Ovary (tissue), 10 donors: ENCODE measurements at regions of chr10 and their contacts with region 1.

Region 1: GRCh38 chr10:4267086-4267773 is 482.2 kb upstream of the KLF6 start:
- DNase-seq: no peak
- H3K4me3 ChIP-seq: no peak overlapping the region
- H3K27ac ChIP-seq: no peak overlapping the region
- H3K4me1 ChIP-seq: peaks cover 12% of the 10 kb centered on the region
- H3K27me3 ChIP-seq: no peaks in the 10 kb centered on the region
- CTCF ChIP-seq: no peak
- EP300 ChIP-seq: no peak
- POLR2A ChIP-seq: no peak

Region 2: GRCh38 chr10:3472287-3473051 is 794.8 kb before region 1 on chr10:
- intact Hi-C with region 1: loop called in 1 of 4 experiments (anchors 10 kb)
- DNase-seq: no peak
- H3K4me3 ChIP-seq: peak overlapping the region; percentile 16
- H3K27ac ChIP-seq: no peak overlapping the region
- H3K4me1 ChIP-seq: peaks cover 17% of the 10 kb centered on the region
- H3K27me3 ChIP-seq: no peaks in the 10 kb centered on the region
- CTCF ChIP-seq: no peak
- EP300 ChIP-seq: no peak
- POLR2A ChIP-seq: no peak

Region 3: DNA sequence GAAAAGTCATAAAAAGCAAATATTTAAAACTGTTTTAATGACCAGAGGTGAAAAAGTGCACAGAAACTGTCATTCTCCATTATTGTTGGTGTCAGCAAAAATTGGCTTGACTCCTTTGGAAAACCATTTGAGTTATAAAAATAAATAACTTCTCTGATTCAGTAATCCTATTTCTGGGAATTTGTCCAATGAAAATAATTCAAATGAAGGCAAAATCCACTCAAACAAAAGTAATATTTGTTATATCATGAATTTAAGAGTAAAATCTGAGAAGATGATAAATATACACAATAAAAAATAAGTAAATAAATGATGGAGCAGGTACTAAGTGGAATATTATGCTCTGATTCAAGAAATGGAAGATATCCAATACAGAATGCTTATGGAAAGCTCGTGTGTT is 155.6 kb before region 1 on chr10:
- intact Hi-C with region 1: no loop called
- DNase-seq: no peak
- H3K4me3 ChIP-seq: no peak overlapping the region
- H3K27ac ChIP-seq: no peak overlapping the region
- H3K4me1 ChIP-seq: no peaks in the 10 kb centered on the region
- H3K27me3 ChIP-seq: no peaks in the 10 kb centered on the region
- CTCF ChIP-seq: no peak
- EP300 ChIP-seq: no peak
- POLR2A ChIP-seq: no peak